GM12878 (cell line): ENCODE measurements at regions of chrX and their contacts with region 1.

Region 1: DNA sequence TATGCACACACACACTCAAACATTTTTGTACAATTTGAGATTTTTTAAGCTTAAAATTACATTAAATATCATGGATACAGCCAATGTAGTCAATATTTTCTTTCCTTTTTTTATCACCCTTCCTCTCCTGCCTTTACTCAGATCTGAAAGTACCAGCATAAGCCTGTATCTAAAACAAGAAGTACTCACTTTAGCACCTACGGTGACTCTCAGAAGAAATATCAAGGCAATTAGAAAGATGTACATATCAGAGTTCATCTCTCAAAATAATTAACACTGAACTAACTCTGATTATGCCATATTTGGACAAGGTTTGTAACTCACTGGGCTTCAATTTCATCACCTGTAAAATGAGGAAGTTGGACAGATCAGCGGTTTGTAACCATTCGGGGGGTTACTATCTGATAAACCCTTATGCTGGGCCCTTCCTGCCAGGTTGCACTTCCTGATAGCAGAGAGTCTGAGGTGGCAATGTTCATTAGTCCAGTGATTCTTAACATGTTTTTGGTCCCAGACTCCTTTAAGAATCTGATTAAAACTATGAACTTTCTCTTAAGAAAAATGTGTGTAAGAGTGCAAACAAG is 5.7 kb upstream of the GPR174 start:
- DNase-seq: peak; percentile 79
- ATAC-seq: peak; percentile 95
- H3K4me3 ChIP-seq: no peak overlapping the region
- H3K27ac ChIP-seq: peak overlapping the region; percentile 84
- H3K4me1 ChIP-seq: peaks cover 10% of the 10 kb centered on the region; the same call in 1 of the 2 replicates
- H3K27me3 ChIP-seq: no peaks in the 10 kb centered on the region
- CTCF ChIP-seq: no peak
- EP300 ChIP-seq: peak; percentile 78 to 83; a peak in 2 of 4 replicates
- POLR2A ChIP-seq: no peak
- RAD21 ChIP-seq: no peak

Region 2: DNA sequence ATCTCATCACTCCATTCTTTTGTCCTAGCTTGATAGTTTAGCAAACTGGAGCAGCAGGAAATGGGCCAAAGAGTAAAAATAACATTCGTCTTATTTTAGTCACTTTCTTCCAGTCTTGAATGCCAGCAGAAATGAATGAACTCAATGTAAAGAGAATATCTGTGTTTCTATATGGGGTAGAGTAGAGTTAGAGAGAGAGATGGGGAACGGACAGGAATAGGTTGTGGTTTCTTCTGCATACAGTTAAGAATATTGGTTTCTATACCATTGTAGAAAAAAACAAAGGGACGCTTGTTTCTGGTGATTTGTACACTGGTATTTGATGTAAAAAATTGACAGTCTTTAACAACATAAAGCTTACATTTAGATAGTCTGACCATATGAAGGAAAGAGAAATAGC is 14.6 kb after region 1 on chrX:
- CTCF ChIA-PET with region 1: interaction called, 6 read pairs
- POLR2A ChIA-PET with region 1: interaction called, 16 read pairs
- RAD21 ChIA-PET with region 1: interaction called, 14 read pairs
- SMC1A ChIA-PET with region 1: interaction called, 32 read pairs
- in situ Hi-C with region 1: no loop called
- intact Hi-C with region 1: no loop called
- DNase-seq: no peak
- ATAC-seq: peak; percentile 48
- H3K4me3 ChIP-seq: no peak overlapping the region
- H3K27ac ChIP-seq: peak overlapping the region; percentile 8; the same call in 1 of the 2 replicates
- H3K4me1 ChIP-seq: peaks cover 2% of the 10 kb centered on the region; the same call in 1 of the 2 replicates
- H3K27me3 ChIP-seq: no peaks in the 10 kb centered on the region
- CTCF ChIP-seq: no peak
- EP300 ChIP-seq: no peak
- POLR2A ChIP-seq: no peak
- RAD21 ChIP-seq: no peak

Region 3: DNA sequence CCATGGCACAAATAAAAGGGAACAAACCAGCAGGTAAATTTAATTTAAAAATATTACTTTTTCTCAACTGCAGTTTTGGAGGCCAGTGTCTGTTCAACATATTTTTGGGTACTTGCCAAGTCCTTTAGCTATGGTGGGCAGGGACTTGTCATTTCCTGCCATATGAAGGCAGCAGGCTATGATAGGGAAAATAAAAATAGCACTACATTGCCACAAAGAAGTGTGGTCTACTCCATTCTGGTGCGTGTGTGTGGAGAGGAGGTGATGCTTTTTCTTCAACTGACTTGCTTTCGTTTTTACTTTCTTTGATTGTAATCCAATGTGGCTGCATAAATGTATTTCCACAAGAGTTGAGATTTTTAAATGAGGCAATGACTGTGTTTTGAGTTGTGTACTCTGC is 22.9 kb after region 1 on chrX:
- CTCF ChIA-PET with region 1: no interaction called
- POLR2A ChIA-PET with region 1: interaction called, 5 read pairs
- RAD21 ChIA-PET with region 1: interaction called, 16 read pairs
- SMC1A ChIA-PET with region 1: interaction called, 32 read pairs
- in situ Hi-C with region 1: no loop called
- intact Hi-C with region 1: no loop called
- DNase-seq: peak; percentile 72
- ATAC-seq: peak; percentile 85
- H3K4me3 ChIP-seq: no peak overlapping the region
- H3K27ac ChIP-seq: peak overlapping the region; percentile 1; the same call in 1 of the 2 replicates
- H3K4me1 ChIP-seq: peaks cover 3% of the 10 kb centered on the region
- H3K27me3 ChIP-seq: no peaks in the 10 kb centered on the region
- CTCF ChIP-seq: no peak
- EP300 ChIP-seq: peak in 1 of 2 experiments; percentile 27; a peak in 2 of 4 replicates
- POLR2A ChIP-seq: no peak
- RAD21 ChIP-seq: no peak

Region 4: DNA sequence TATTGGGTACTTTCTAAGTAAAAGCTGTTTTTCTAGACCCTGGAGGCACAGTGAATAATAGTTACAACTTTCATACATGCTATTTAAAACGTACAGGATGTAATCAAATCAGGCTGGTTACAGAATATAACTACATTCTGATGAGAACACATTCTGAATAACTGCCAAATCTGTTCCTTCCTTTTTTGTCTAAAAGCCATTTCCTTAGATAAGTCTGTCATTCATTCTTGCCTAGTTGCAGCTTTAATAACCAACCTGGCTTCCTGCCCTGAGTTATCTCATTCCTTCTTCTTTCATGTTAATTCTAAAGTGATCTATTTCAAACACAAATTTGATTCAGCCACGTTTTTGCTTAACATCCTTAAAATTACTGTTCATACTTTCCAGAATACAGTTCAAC is 418.1 kb after region 1 on chrX:
- CTCF ChIA-PET with region 1: no interaction called
- POLR2A ChIA-PET with region 1: no interaction called
- RAD21 ChIA-PET with region 1: no interaction called
- SMC1A ChIA-PET with region 1: no interaction called
- in situ Hi-C with region 1: no loop called
- intact Hi-C with region 1: no loop called
- DNase-seq: no peak
- ATAC-seq: no peak
- H3K4me3 ChIP-seq: no peak overlapping the region
- H3K27ac ChIP-seq: no peak overlapping the region
- H3K4me1 ChIP-seq: no peaks in the 10 kb centered on the region
- H3K27me3 ChIP-seq: no peaks in the 10 kb centered on the region
- CTCF ChIP-seq: no peak
- EP300 ChIP-seq: no peak
- POLR2A ChIP-seq: no peak
- RAD21 ChIP-seq: no peak